Endothelial cell of umbilical vein (primary cell): ENCODE measurements at regions of chr15 and their contacts with region 1.

Region 1: DNA sequence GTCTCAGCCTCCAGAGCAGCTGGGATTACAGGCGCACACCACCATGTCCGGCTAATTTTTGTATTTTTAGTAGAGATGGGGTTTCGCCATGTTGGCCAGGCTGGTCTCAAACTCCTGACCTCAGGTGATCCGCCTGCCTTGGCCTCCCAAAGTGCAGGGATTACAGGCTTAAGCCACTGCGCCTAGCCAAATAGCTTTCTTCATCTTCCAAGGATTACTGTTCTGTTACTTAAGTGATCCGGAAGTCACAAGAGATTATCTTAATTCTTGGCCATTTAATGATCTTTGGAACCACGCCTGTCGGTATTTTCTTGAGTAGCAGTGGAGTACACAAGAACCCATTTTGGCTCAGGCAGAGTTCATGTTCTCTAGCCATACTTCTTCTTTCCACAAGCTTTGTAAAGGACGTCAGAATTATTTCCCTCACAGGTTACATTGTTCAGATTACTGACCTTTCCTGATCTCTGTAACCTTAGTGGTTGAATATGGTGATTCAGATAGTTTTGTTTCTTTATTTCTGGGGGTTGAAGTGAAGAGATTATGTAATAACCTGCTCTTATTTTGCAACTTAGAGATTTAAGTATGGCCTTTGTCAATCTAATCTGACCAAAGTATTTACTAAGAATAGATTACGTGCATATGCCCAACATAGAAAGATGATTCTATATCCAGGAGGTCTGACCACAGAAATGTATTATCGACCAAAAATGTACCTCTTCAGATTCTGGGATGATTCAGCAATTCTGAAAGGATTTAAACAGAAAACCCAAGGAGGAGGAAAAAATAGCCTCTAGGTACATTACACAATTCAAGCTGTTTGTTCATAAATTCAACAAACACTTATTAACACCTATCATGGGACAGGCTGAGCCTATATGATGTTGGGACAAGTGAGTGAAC is 132.2 kb downstream of the GREM1 start:
- DNase-seq: no peak
- H3K4me3 ChIP-seq: no peak overlapping the region
- H3K27ac ChIP-seq: no peak overlapping the region
- H3K4me1 ChIP-seq: peaks cover 15% of the 10 kb centered on the region
- H3K27me3 ChIP-seq: no peaks in the 10 kb centered on the region
- CTCF ChIP-seq: no peak
- POLR2A ChIP-seq: no peak

Region 2: DNA sequence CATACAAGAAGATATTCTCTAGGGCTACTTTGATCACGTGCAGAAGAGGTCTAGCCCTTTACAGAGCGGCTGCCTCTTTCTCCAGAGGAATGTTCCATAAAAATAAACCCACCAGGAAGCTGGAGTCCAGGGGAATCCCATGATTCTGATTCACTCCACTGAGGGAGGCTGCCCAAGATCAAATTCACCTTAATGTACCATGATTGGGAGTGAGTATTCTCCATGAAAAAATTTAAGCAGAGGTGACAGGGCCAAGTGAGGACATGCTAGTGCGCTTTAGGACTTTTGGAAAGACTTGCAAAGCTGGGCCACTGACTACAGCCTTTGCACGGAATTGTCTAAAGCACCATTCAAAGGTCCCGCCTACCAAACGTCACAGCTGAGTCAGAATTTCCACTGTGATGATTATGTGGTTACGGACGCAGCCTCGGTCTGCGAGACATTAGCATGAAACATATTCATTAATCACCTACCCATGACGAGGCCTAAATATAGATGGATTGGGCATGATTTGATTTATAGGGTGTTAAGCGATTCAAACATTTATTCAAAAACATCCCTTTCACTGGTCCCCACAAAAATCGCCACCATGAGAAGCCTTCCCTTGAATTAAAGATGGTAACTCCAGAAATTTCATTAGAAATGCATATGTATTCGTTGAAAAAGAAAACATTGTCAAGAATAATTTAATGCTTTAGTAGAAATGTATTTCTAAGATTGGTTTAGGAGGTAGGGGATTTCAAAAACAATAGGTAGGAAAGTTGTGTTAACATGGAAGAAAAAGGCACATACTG is 20.4 kb after region 1 on chr15:
- CTCF ChIA-PET with region 1: interaction called, 3 read pairs
- POLR2A ChIA-PET with region 1: no interaction called
- dilution Hi-C with region 1: no loop called
- intact Hi-C with region 1: loop called (anchors 2 kb)
- DNase-seq: no peak
- H3K4me3 ChIP-seq: no peak overlapping the region
- H3K27ac ChIP-seq: peak overlapping the region; percentile 3
- H3K4me1 ChIP-seq: no peaks in the 10 kb centered on the region
- H3K27me3 ChIP-seq: no peaks in the 10 kb centered on the region
- CTCF ChIP-seq: no peak
- POLR2A ChIP-seq: no peak

Region 3: DNA sequence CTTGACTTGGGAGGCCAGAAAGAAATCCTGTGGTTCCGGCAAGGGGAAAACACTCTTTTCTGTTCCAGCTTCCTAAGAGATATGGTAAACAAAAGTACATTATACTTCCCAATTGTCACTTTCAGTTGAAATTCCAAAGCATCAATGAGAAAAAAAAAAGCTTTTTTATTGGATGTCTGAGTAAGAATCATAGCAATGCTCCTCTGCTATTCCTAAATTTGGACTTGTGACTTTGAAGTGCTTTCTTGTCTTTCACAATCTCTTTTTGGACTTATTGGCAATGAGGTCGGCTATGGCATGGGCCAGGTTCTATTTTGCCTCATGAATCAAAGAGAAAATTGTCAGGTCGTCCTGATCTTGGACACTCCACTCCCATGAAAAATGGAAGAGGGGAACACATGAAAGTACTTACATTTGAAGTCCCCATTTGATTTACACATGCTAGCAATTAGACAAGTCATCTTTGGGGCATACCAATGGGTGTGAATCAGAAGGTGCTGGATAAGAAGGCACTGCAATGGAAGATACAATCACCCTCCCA is 38.3 kb after region 1 on chr15:
- CTCF ChIA-PET with region 1: interaction called, 3 read pairs
- POLR2A ChIA-PET with region 1: no interaction called
- dilution Hi-C with region 1: no loop called
- intact Hi-C with region 1: loop called (anchors 2 kb)
- DNase-seq: no peak
- H3K4me3 ChIP-seq: no peak overlapping the region
- H3K27ac ChIP-seq: no peak overlapping the region
- H3K4me1 ChIP-seq: no peaks in the 10 kb centered on the region
- H3K27me3 ChIP-seq: no peaks in the 10 kb centered on the region
- CTCF ChIP-seq: no peak
- POLR2A ChIP-seq: no peak

Region 4: GRCh38 chr15:32956006-32956405 is 106.0 kb after region 1 on chr15:
- CTCF ChIA-PET with region 1: interaction called, 162 read pairs
- POLR2A ChIA-PET with region 1: no interaction called
- dilution Hi-C with region 1: no loop called
- intact Hi-C with region 1: no loop called
- DNase-seq: peak; percentile 51
- H3K4me3 ChIP-seq: no peak overlapping the region
- H3K27ac ChIP-seq: no peak overlapping the region
- H3K4me1 ChIP-seq: no peaks in the 10 kb centered on the region
- H3K27me3 ChIP-seq: peaks cover 3 to 6% of the 10 kb centered on the region in 2 experiments
- CTCF ChIP-seq: peak; percentile 43 to 46
- POLR2A ChIP-seq: no peak